ENCODE measurements at regions of chr19 and their contacts with region 1.

Region 1: DNA sequence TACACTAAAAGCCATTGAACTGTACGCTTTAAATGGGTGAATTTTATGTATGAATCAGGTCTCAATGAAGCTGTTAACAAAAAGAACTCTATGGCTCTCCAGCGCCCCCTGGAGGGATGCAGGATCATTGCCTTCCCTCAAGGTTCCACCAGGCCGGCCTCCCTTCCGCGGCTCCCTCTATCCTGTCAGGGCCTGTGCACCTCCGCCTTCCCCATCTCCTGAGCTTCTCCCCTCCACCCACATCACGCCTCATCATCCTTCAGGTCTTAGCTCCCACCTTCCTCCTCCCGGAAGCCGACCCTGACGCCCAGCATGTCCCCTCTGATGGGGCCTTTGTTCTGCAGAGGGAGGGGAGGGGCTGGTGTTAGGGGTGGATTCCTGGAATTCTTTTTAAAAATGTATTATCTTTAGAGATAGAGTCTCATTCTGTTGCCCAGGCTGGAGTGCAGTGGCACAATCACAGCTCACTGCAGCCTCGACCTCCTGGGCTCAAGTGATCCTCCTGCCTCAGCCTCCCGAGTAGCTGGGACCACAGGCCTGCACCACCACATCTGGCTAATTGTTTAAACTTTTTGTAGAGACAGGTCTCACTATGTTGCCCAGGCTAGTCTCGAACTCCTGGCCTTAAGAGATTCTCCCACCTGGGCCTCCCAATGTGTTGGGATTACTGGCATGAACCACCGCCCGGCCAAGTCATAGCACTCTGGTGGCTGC is 27.7 kb downstream of the MEIS3 start:
- DNase-seq: peak; percentile 81 to 87 (median 84)
- ATAC-seq: peak; percentile 94 to 96 (median 94)
- H3K4me3 ChIP-seq: no peak overlapping the region
- H3K27ac ChIP-seq: no peak overlapping the region
- H3K4me1 ChIP-seq: no peaks in the 10 kb centered on the region
- H3K27me3 ChIP-seq: no peaks in the 10 kb centered on the region
- CTCF ChIP-seq: peak; percentile 91 to 95 (median 92)
- POLR2A ChIP-seq: no peak

Region 2: GRCh38 chr19:47296036-47296435 is 95.6 kb before region 1 on chr19:
- intact Hi-C with region 1: loop called (anchors 5 kb)
- DNase-seq: peak; percentile 60 to 82 (median 67)
- ATAC-seq: peak; percentile 91 to 99 (median 93)
- H3K4me3 ChIP-seq: no peak overlapping the region
- H3K27ac ChIP-seq: no peak overlapping the region
- H3K4me1 ChIP-seq: peaks cover 0 to 2% (median 0%) of the 10 kb centered on the region in 4 donors
- H3K27me3 ChIP-seq: no peaks in the 10 kb centered on the region
- CTCF ChIP-seq: peak; percentile 79 to 82 (median 81)
- POLR2A ChIP-seq: no peak

Region 3: GRCh38 chr19:47469363-47469700 is 77.7 kb after region 1 on chr19:
- intact Hi-C with region 1: no loop called
- DNase-seq: peak in 1 of 3 donors; percentile 23
- ATAC-seq: no peak
- H3K4me3 ChIP-seq: no peak overlapping the region
- H3K27ac ChIP-seq: no peak overlapping the region
- H3K4me1 ChIP-seq: no peaks in the 10 kb centered on the region
- H3K27me3 ChIP-seq: no peaks in the 10 kb centered on the region
- CTCF ChIP-seq: no peak
- POLR2A ChIP-seq: no peak

Region 4: GRCh38 chr19:47582320-47582909 is 190.7 kb after region 1 on chr19:
- intact Hi-C with region 1: no loop called
- DNase-seq: no peak
- ATAC-seq: no peak
- H3K4me3 ChIP-seq: no peak overlapping the region
- H3K27ac ChIP-seq: no peak overlapping the region
- H3K4me1 ChIP-seq: no peaks in the 10 kb centered on the region
- H3K27me3 ChIP-seq: no peaks in the 10 kb centered on the region
- CTCF ChIP-seq: no peak
- POLR2A ChIP-seq: no peak

Measured in right lobe of liver (tissue), 6 donors.